Heart right ventricle (tissue), 16 donors: ENCODE measurements at regions of chr5 and their contacts with region 1.

Region 1: DNA sequence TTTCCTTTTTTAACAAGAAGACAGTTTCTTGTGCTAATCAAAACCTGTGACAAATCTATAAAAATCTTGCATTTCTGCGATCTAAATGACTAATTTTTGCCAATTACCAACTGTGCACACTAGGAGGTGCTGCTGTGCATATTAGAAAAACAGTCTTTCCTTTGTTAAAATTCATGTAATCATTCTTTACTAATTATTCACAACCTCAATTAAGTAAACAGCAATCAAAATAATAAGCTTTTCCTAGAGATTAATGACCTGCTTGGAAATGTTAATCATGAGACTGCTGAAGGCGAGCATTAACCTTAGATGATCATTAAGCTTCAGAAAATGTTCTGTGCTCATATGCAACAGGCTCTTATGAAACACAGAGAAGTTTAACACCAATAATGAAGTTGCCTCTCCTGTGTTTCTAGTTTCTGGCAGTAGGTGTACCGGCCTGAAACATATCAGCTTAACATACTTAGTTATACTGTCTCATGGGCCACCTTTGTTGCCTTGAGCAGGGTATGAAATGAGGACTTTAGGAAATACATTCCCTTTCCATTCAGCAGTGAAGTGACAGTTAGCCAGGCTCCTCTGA is 17.7 kb downstream of the RFESD start:
- DNase-seq: no peak
- ATAC-seq: peak in 4 of 8 donors; percentile 24 to 42 (median 34)
- H3K4me3 ChIP-seq: peak overlapping the region in 1 of 10 donors; percentile 10
- H3K27ac ChIP-seq: peak overlapping the region in 4 of 10 donors; percentile 3 to 51 (median 20)
- H3K4me1 ChIP-seq: peaks cover 0 to 23% (median 14%) of the 10 kb centered on the region in 9 donors
- H3K27me3 ChIP-seq: no peaks in the 10 kb centered on the region
- CTCF ChIP-seq: peak; percentile 58 to 88 (median 79)

Region 2: GRCh38 chr5:95624368-95624767 is 39.9 kb before region 1 on chr5:
- intact Hi-C with region 1: loop called in 1 of 10 experiments (anchors 2 kb)
- DNase-seq: no peak
- ATAC-seq: no peak
- H3K4me3 ChIP-seq: no peak overlapping the region
- H3K27ac ChIP-seq: no peak overlapping the region
- H3K4me1 ChIP-seq: peaks cover 0 to 38% (median 18%) of the 10 kb centered on the region in 9 donors
- H3K27me3 ChIP-seq: peaks cover 0 to 9% (median 0%) of the 10 kb centered on the region in 7 donors
- CTCF ChIP-seq: no peak

Region 3: GRCh38 chr5:95646554-95647431 is 17.5 kb before region 1 on chr5 and contains the start of gene RFESD:
- intact Hi-C with region 1: no loop called
- DNase-seq: peak; percentile 97 to 99
- ATAC-seq: peak; percentile 98 to 100 (median 99)
- H3K4me3 ChIP-seq: peak within 1 kb of the TSS; percentile 37 to 83 (median 60)
- H3K27ac ChIP-seq: peak within 1 kb of the TSS; percentile 88 to 94 (median 91)
- H3K4me1 ChIP-seq: peaks cover 0 to 17% (median 9%) of the 10 kb centered on the region in 9 donors
- H3K27me3 ChIP-seq: no peaks in the 10 kb centered on the region
- CTCF ChIP-seq: peak in 5 of 9 donors; percentile 10 to 32 (median 16)
- total RNA-seq, gene RFESD: 2.4 to 5.3 (median 3.8) TPM

Region 4: DNA sequence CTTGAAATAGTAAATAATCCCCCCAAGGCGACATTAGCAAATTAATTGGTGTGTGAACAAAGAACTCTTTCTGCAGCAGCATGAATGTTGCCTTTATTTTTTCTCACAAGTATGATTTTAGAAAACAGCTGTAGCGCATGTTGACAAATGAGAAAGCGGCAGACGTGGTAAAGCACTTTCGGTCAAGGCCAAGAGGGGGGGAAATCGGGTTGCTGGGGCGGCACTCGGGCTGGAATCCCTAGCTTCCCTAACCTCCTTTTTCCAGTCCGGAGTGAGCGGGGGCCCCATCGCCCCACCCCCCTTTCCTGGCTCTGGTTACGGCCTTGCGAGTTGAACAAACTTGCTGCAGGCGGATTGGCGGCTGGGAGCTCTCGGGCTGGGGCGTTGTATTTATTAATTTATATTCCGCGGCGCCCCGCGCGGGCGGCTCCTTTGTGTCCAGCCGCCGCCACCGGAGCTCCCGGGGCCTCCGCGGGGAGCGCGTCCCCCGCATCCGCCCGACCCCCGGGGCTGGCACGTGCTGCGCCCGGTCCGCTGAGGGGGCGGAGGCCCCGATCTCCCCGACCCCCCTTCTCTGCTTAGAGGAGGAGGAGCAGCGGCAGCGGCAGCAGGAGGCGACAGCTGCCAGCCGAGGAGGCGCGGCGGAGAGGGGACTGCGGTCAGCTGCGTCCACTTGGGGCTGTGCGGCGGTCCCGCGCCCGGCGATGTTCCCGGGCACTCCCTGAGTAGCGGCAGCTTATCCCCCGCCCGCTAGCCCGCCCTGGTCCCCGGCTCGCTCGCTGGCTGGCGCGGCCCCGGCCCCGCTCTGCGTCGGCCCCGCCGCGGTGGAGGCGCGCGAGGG is 66.7 kb after region 1 on chr5 and contains the start of gene RHOBTB3:
- intact Hi-C with region 1: loop called (anchors 2 to 10 kb)
- DNase-seq: peak; percentile 90 to 91
- ATAC-seq: peak; percentile 74 to 88 (median 78)
- H3K4me3 ChIP-seq: peak within 1 kb of the TSS; percentile 56 to 84 (median 78)
- H3K27ac ChIP-seq: peak within 1 kb of the TSS; percentile 79 to 98 (median 93)
- H3K4me1 ChIP-seq: peaks cover 0 to 75% (median 48%) of the 10 kb centered on the region in 9 donors
- H3K27me3 ChIP-seq: peaks cover 0 to 9% (median 0%) of the 10 kb centered on the region in 7 donors
- CTCF ChIP-seq: peak in 1 of 9 donors; percentile 25
- total RNA-seq, gene RHOBTB3: 73.1 to 124 (median 94.4) TPM

Region 5: GRCh38 chr5:95773335-95774059 is 109.2 kb after region 1 on chr5:
- intact Hi-C with region 1: loop called in 4 of 10 experiments (anchors 5 to 10 kb)
- DNase-seq: no peak
- ATAC-seq: peak in 4 of 8 donors; percentile 10 to 49 (median 33)
- H3K4me3 ChIP-seq: no peak overlapping the region
- H3K27ac ChIP-seq: peak overlapping the region in 1 of 10 donors; percentile 62
- H3K4me1 ChIP-seq: peaks cover 0 to 33% (median 23%) of the 10 kb centered on the region in 9 donors
- H3K27me3 ChIP-seq: no peaks in the 10 kb centered on the region
- CTCF ChIP-seq: no peak

Region 6: GRCh38 chr5:95781101-95781583 is 116.8 kb after region 1 on chr5:
- intact Hi-C with region 1: loop called in 3 of 10 experiments (anchors 5 to 10 kb)
- DNase-seq: peak; percentile 68 to 84
- ATAC-seq: peak; percentile 88 to 95 (median 92)
- H3K4me3 ChIP-seq: no peak overlapping the region
- H3K27ac ChIP-seq: peak overlapping the region in 8 of 10 donors; percentile 5 to 77 (median 46)
- H3K4me1 ChIP-seq: peaks cover 0 to 52% (median 30%) of the 10 kb centered on the region in 9 donors
- H3K27me3 ChIP-seq: no peaks in the 10 kb centered on the region
- CTCF ChIP-seq: peak in 8 of 9 donors; percentile 70 to 96 (median 91)

Region 7: GRCh38 chr5:95846554-95847260 is 182.4 kb after region 1 on chr5:
- intact Hi-C with region 1: loop called in 9 of 10 experiments (anchors 1 to 5 kb)
- DNase-seq: peak in 1 of 2 donors; percentile 71
- ATAC-seq: peak; percentile 56 to 84 (median 72)
- H3K4me3 ChIP-seq: no peak overlapping the region
- H3K27ac ChIP-seq: no peak overlapping the region
- H3K4me1 ChIP-seq: peaks cover 0 to 41% (median 12%) of the 10 kb centered on the region in 9 donors
- H3K27me3 ChIP-seq: no peaks in the 10 kb centered on the region
- CTCF ChIP-seq: peak; percentile 92 to 98 (median 96)